SK-N-SH (cell line): ENCODE measurements at regions of chr2 and their contacts with region 1.

Region 1: DNA sequence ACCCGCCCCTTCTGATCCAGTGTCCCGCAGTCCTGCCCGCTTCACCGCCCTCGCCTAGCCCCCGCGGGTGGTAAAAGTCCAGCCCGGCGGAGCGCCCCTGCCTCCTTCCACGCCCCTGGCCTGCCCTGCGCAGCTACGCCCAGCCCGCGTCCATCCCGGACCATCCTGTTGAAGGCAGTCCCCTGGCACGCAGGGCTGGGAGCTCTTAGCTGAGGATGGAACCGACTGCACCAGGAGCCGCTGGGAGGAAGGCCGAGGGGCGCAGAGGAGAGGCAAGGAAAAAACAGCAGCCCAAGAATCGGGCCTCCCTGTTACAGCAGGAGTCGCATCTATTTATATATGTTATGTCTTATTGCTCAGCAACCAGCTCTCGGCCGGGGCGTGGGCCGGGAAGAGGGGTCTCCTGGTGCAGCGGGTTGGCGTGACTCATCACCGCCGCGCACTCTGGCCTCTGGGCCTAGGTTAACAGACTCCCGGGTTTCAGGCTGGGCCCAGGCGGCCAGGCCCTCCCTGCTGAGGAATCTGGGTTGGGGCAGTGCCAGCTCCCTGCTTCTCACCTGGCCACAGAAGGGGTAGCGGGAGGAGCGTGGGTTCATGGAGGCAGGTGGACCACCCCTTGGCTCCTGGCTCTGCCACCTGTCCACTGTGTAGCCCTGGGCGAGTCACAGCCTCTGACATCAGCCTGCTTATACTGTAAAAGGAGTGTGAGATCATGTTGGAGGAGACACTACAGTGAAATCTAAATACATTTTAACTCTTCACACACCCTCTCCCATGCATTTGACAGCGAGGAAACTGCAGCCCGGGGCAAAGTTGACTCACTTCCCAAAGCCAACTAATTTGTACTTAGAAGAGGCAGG is 13.4 kb upstream of the MAP3K2 start:
- DNase-seq: no peak
- H3K4me3 ChIP-seq: no peak overlapping the region
- H3K27ac ChIP-seq: peak overlapping the region in 1 of 2 experiments; percentile 20; a peak in 2 of 4 replicates
- H3K4me1 ChIP-seq: peaks cover 10 to 30% of the 10 kb centered on the region in 2 experiments; a peak in 3 of 4 replicates
- H3K27me3 ChIP-seq: no peaks in the 10 kb centered on the region
- CTCF ChIP-seq: no peak
- EP300 ChIP-seq: no peak
- RAD21 ChIP-seq: no peak

Region 2: DNA sequence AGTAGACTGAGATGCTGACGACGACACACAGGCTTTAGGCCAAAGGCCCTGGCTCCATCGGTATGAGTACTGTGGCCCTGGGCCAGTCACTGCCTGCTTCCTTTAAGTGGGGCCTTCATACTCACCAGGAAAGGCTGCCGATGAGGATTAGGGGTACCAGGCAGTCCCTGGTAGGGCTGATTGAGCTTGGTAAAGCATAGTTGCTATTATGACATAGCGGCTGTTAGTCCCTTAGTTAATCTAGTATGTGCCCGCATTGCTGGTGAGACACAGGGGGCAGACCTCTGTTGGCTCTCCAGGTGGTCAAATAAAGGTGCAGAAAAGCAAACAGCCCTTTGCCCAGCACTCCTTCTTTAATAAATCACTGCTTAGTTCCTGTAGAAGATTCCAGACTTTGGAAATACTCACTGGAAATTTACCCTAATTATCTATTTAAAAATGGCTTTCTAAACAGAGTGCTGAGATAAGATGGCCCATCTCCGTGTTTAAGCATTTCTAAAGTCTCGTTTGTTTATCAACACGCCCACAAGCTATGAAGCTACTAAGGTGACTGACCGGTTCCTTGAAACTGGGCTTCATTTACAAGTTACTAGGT is 285.6 kb before region 1 on chr2:
- CTCF ChIA-PET with region 1: no interaction called
- POLR2A ChIA-PET with region 1: no interaction called
- DNase-seq: no peak
- H3K4me3 ChIP-seq: no peak overlapping the region
- H3K27ac ChIP-seq: no peak overlapping the region
- H3K4me1 ChIP-seq: peaks cover 0 to 5% of the 10 kb centered on the region in 2 experiments; a peak in 1 of 4 replicates
- H3K27me3 ChIP-seq: peaks cover 11% of the 10 kb centered on the region; the same call in 1 of the 2 replicates
- CTCF ChIP-seq: no peak
- EP300 ChIP-seq: no peak
- RAD21 ChIP-seq: no peak

Region 3: DNA sequence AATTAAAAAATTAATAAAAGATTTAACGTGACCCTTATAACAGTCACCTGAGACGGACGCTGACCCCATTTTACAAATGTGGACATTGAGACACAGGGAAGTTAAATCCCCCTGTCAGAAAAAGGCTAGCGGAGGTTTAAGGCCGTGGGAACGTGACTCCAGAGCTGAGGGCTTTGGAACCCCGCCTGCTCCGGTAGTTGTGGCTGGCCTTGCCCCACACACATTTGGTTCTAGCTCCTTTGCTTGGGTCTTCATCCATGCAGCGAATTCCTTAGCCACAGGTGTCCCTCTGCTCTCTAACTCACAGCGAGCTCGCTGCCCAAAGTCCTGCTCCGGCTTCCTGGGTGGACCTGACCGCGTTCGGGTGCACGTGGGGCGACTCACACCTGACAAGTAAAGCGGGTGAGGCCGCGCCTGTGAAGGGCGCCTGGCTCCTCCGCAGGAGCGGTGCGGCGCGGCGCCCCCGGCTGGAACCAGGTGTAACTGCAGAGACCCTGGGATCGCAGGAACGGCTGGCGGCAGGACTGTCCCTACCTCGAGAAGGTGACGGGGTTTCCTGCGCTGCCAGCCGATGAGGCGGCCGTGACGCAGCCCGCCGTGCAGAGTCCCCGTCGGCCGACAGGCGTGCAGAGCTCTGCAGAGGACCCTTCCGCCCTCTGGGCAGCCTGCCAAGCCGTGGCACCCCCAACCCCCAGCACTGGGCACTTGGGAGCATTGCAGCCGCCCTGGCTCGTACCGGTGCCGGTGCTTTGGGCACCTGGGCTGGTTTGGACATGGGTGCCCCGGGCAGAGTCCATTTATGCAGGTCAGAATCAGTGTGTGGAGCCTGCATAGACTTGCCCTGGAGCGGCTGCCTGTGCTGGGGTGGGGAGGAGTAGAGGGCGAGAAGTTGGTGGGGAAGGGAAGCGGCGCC is 14.7 kb after region 1 on chr2:
- CTCF ChIA-PET with region 1: interaction called, 13 read pairs
- POLR2A ChIA-PET with region 1: interaction called, 3 read pairs
- DNase-seq: peak; percentile 90
- H3K4me3 ChIP-seq: peak overlapping the region in 1 of 2 experiments; percentile 39; a peak in 2 of 4 replicates
- H3K27ac ChIP-seq: no peak overlapping the region
- H3K4me1 ChIP-seq: peaks cover 17 to 23% of the 10 kb centered on the region in 2 experiments; a peak in 3 of 4 replicates
- H3K27me3 ChIP-seq: no peaks in the 10 kb centered on the region
- CTCF ChIP-seq: peak; percentile 58
- EP300 ChIP-seq: no peak
- RAD21 ChIP-seq: peak; percentile 58